CD14-positive monocyte (primary cell): ENCODE measurements at regions of chr20 and their contacts with region 1.

Region 1: DNA sequence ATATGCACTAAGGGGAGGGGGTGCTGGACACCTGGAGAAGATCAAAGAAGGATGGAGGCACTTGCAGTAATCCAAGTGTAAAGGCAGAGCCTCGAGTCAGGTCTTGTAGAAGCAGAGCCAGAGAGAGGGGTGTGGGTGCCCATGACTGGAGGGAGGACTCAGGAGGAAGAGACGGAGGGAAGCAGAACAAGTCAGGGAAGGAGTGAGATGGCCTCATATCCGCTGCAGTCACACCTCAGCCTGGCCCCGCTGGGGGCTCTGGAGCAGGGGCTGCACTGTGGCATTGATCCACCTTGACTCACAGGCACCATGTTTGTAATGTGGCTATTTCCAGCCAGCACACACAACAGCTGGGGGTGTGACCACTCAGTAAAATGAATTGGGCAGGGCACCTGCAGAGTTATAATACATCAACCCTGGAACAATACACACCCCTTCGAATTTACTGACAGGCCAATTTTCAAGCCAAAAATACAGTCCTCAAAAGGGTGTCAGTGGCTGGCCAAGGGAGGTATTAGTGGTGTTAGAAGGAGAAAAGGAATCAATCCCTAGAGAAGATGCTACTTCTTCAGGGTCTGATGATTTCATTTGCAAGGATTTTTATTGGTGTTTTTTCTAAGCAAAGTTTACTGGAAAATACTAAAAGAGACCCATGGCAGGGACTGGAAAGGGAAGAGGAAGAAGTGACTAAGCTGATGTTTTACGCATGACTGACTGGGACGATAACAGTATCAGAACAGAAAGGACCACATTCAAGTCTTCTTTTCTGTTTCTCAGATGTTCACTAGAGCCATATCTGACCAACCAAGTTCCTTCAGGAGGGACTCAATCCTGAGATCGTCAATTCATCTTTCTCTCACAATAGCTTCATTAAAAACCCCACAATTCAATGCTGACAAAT is 18.9 kb upstream of the NXT1 start:
- DNase-seq: no peak
- H3K4me3 ChIP-seq: no peak overlapping the region
- H3K4me3 Mint-ChIP-seq: no peak overlapping the region
- H3K27ac ChIP-seq: no peak overlapping the region
- H3K27ac Mint-ChIP-seq: peak overlapping the region in 1 of 7 donors; percentile 65
- H3K4me1 ChIP-seq: no peaks in the 10 kb centered on the region
- H3K4me1 Mint-ChIP-seq: peaks cover 17% of the 10 kb centered on the region
- H3K27me3 ChIP-seq: no peaks in the 10 kb centered on the region
- H3K27me3 Mint-ChIP-seq: peaks cover 0 to 4% (median 2%) of the 10 kb centered on the region in 3 donors
- CTCF ChIP-seq: no peak

Region 2: GRCh38 chr20:23034721-23035671 is 296.7 kb before region 1 on chr20 and contains the start of gene SSTR4:
- intact Hi-C with region 1: loop called in 1 of 2 experiments (anchors 5 kb)
- DNase-seq: no peak
- H3K4me3 ChIP-seq: no peak within 1 kb of the TSS
- H3K4me3 Mint-ChIP-seq: peak within 1 kb of the TSS in 1 of 2 donors; percentile 77
- H3K27ac ChIP-seq: no peak within 1 kb of the TSS
- H3K27ac Mint-ChIP-seq: no peak within 1 kb of the TSS
- H3K4me1 ChIP-seq: peaks cover 0 to 17% of the 10 kb centered on the region in 2 donors
- H3K4me1 Mint-ChIP-seq: peaks cover 16% of the 10 kb centered on the region
- H3K27me3 ChIP-seq: peaks cover 28 to 47% of the 10 kb centered on the region in 2 donors
- H3K27me3 Mint-ChIP-seq: peaks cover 45 to 64% (median 47%) of the 10 kb centered on the region in 3 donors
- CTCF ChIP-seq: no peak
- polyA plus RNA-seq, gene SSTR4: not detected

Region 3: GRCh38 chr20:23050847-23051631 is 280.7 kb before region 1 on chr20:
- intact Hi-C with region 1: loop called in 1 of 2 experiments (anchors 5 kb)
- DNase-seq: peak; percentile 72 to 86 (median 78)
- H3K4me3 ChIP-seq: peak overlapping the region; percentile 43 to 79 (median 50)
- H3K4me3 Mint-ChIP-seq: peak overlapping the region; percentile 88 to 93
- H3K27ac ChIP-seq: peak overlapping the region; percentile 45 to 91
- H3K27ac Mint-ChIP-seq: peak overlapping the region; percentile 88 to 97 (median 92)
- H3K4me1 ChIP-seq: peaks cover 43 to 57% of the 10 kb centered on the region in 2 donors
- H3K4me1 Mint-ChIP-seq: peaks cover 42% of the 10 kb centered on the region
- H3K27me3 ChIP-seq: peaks cover 0 to 11% of the 10 kb centered on the region in 2 donors
- H3K27me3 Mint-ChIP-seq: peaks cover 9 to 22% (median 20%) of the 10 kb centered on the region in 3 donors
- CTCF ChIP-seq: peak; percentile 97

Region 4: DNA sequence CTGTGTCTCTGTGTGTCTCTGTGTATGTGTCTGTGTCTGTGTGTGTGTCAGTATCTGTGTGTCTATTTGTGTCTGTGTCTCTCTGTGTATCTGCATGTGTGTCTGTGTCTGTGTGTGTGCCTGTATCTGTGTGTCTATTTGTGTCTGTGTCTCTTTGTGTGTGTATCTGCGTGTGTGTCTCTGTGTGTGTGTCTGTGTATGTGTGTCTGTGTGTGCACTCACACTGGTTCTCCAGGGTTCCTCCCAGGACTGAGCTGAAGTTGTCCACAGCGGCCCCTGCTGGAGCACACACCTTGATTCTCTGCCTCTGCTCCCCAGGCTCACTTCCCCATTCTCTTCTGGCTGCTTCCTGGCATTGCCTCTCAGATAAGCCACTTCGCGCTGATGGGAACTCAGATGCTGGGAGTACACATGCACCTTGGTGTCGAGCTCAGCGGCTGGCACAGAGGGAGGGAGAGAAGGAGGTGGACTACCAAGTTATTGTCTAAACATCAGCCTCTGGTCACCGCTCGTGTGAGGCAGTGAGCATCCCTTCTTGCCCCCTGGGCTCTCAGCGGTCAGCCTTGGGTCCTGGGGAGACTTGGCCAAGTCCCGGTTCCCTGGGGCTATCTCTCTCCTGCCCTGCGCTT is 86.0 kb before region 1 on chr20:
- intact Hi-C with region 1: loop called in 1 of 2 experiments (anchors 5 kb)
- DNase-seq: peak; percentile 84 to 88 (median 86)
- H3K4me3 ChIP-seq: no peak overlapping the region
- H3K4me3 Mint-ChIP-seq: no peak overlapping the region
- H3K27ac ChIP-seq: no peak overlapping the region
- H3K27ac Mint-ChIP-seq: peak overlapping the region in 6 of 7 donors; percentile 0 to 74 (median 14)
- H3K4me1 ChIP-seq: peaks cover 0 to 9% of the 10 kb centered on the region in 2 donors
- H3K4me1 Mint-ChIP-seq: peaks cover 16% of the 10 kb centered on the region
- H3K27me3 ChIP-seq: no peaks in the 10 kb centered on the region
- H3K27me3 Mint-ChIP-seq: peaks cover 0 to 12% (median 2%) of the 10 kb centered on the region in 3 donors
- CTCF ChIP-seq: peak; percentile 72